Right lobe of liver (tissue), 6 donors: ENCODE measurements at regions of chr2 and their contacts with region 1.

Region 1: GRCh38 chr2:102187496-102188150 is 800 bp downstream of the IL1RL2 start:
- DNase-seq: peak; percentile 68 to 73 (median 71)
- ATAC-seq: peak; percentile 69 to 81 (median 78)
- H3K4me3 ChIP-seq: peak overlapping the region; percentile 39 to 63 (median 59)
- H3K27ac ChIP-seq: peak overlapping the region; percentile 59 to 77 (median 69)
- H3K4me1 ChIP-seq: peaks cover 0 to 13% (median 2%) of the 10 kb centered on the region in 4 donors
- H3K27me3 ChIP-seq: no peaks in the 10 kb centered on the region
- CTCF ChIP-seq: peak; percentile 12 to 38 (median 18)
- POLR2A ChIP-seq: no peak

Region 2: GRCh38 chr2:101806123-101806522 is 381.5 kb before region 1 on chr2:
- intact Hi-C with region 1: no loop called
- DNase-seq: no peak
- ATAC-seq: no peak
- H3K4me3 ChIP-seq: no peak overlapping the region
- H3K27ac ChIP-seq: peak overlapping the region in 1 of 3 donors; percentile 37
- H3K4me1 ChIP-seq: peaks cover 0 to 49% (median 18%) of the 10 kb centered on the region in 4 donors
- H3K27me3 ChIP-seq: no peaks in the 10 kb centered on the region
- CTCF ChIP-seq: no peak
- POLR2A ChIP-seq: no peak

Region 3: DNA sequence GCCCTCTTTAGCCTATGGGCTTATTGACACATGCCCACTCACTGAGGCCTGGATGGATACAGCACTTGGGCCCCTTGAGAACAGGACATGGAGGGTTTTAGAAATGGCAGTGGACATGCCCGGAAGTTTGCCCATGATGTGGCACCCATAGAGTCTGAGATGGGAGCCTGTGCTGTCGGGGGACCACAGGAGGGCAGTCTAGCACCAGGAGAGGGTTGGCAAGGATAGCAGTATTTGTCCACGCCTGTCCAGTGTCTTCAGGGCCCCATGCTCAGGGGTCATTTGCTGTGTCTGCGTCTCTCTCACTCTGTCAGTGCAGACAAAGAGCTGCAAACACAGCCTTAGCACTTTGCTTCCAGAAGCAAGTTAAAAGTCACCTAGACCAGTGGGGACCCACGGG is 47.9 kb after region 1 on chr2:
- intact Hi-C with region 1: loop called in 1 of 2 experiments (anchors 10 kb)
- DNase-seq: no peak
- ATAC-seq: peak; percentile 53 to 78 (median 70)
- H3K4me3 ChIP-seq: no peak overlapping the region
- H3K27ac ChIP-seq: no peak overlapping the region
- H3K4me1 ChIP-seq: peaks cover 0 to 2% (median 0%) of the 10 kb centered on the region in 4 donors
- H3K27me3 ChIP-seq: no peaks in the 10 kb centered on the region
- CTCF ChIP-seq: peak; percentile 30 to 38 (median 31)
- POLR2A ChIP-seq: no peak